ENCODE measurements at regions of chrX and their contacts with region 1.

Region 1: DNA sequence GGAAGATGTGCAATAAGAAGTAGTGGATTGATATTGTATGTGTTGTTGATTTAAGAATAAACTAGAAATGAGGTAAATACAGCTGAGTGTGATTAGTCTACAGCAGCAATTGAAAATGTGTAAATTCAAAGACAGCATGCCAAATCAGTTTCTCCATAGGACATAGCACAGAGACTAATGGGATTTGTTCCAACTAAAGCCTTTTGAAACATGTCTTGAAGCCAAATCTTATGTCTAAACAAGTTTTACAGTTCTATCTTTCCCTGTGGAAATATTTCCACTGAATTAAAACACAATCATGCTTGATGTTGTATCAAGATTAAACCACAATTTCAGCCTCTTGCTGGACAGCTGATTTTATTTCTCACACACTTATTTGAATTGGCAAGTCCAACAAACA is 497.4 kb upstream of the FAM47C start:
- DNase-seq: no peak
- H3K4me3 ChIP-seq: no peak overlapping the region
- H3K27ac ChIP-seq: no peak overlapping the region
- H3K4me1 ChIP-seq: no peaks in the 10 kb centered on the region
- H3K27me3 ChIP-seq: no peaks in the 10 kb centered on the region
- CTCF ChIP-seq: no peak

Region 2: DNA sequence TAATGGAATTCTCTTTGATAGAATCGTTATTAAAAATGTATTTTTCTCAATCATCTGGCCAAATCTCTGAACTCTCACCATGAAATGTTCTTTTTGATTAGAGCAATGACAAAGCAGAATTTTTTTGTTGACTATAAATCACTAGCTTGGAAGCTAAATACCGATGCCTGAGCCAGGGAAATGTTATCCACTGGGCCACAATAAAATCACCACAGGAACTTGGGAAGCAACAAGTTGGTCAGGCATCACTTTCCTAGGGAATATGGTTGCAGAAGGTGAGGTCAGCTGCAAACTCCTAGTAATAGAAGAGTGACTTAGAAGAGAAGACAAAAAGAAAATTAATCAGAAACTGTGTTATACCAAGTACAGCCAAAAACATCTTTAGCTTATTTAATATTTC is 651.8 kb before region 1 on chrX:
- CTCF ChIA-PET with region 1: no interaction called
- POLR2A ChIA-PET with region 1: no interaction called
- intact Hi-C with region 1: no loop called
- DNase-seq: no peak
- H3K4me3 ChIP-seq: no peak overlapping the region
- H3K27ac ChIP-seq: no peak overlapping the region
- H3K4me1 ChIP-seq: no peaks in the 10 kb centered on the region
- H3K27me3 ChIP-seq: no peaks in the 10 kb centered on the region
- CTCF ChIP-seq: no peak

Region 3: DNA sequence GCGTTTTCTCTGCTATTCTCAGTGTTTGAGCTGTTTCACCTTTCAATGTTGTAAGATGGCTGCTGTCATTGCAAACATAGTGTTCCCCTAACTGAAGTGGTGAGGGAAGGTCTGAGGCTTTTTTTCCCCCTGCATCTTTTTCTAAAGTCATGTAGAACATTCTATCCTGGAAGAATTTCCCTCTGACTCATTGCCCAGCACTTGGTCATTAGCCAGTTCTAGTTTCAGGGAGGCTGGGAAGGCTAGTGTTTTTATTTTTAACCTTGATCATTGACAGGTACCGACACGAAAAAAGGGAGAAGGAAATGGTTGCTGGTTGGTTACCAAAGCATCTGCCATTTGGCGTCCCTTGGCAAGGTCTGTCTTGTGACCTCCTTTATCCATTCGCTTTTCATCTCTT is 1067.3 kb after region 1 on chrX:
- CTCF ChIA-PET with region 1: no interaction called
- POLR2A ChIA-PET with region 1: interaction called, 12 read pairs
- intact Hi-C with region 1: no loop called
- DNase-seq: no peak
- H3K4me3 ChIP-seq: no peak overlapping the region
- H3K27ac ChIP-seq: no peak overlapping the region
- H3K4me1 ChIP-seq: no peaks in the 10 kb centered on the region
- H3K27me3 ChIP-seq: no peaks in the 10 kb centered on the region
- CTCF ChIP-seq: no peak